Activated CD8-positive, alpha-beta T cell treated with anti-CD3 and anti-CD28 coated beads for 36 hours (primary cell): ENCODE measurements at regions of chr1 and their contacts with region 1.

Region 1: DNA sequence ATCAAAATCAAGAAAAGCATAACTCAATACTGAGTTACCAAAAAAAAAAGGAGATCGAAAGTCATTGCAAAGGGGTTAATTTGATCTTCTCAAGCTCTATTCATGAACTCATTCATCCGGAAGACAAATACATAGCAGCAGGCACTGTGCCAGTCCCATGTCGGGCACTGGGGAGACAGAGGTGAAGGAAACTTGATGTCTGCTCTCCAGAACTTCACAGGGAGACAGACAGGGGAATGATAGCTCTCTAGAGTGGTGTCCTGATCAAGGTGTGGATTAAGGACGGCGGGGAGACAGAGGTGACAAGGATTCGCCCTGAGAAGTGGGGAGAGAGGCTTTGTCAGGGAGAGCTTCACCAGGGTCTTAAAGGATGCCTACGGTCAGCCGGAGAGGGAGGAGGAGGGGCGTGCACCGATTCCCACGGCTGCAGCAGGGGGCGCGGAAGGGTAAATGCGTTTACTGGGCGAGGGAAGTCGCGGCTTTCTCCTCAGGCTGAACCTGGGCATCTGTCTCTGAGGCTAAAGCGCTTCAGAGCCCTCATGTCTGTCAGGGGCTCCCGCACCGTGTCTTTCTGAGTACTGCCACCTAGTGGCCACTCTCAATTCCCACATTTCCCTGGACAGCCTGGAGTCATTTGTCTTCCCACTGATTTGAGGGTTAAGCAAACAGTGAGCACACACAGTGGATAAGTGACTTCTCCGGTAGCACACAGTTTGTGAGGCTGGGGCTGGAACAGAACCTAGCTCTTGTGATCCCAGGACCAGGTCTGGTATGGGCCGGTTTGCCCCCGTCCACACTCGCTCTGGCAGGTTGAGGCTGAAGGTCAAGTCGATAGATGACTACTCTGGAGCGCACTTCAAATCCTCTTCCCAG is 152.8 kb downstream of the TENT5C start:
- DNase-seq: peak; percentile 78
- ATAC-seq: peak; percentile 89
- H3K4me3 Mint-ChIP-seq: peak overlapping the region; percentile 62
- H3K27ac Mint-ChIP-seq: no peak overlapping the region
- H3K4me1 Mint-ChIP-seq: peaks cover 5% of the 10 kb centered on the region
- H3K27me3 Mint-ChIP-seq: peaks cover 12% of the 10 kb centered on the region
- CTCF ChIP-seq: peak; percentile 86

Region 2: DNA sequence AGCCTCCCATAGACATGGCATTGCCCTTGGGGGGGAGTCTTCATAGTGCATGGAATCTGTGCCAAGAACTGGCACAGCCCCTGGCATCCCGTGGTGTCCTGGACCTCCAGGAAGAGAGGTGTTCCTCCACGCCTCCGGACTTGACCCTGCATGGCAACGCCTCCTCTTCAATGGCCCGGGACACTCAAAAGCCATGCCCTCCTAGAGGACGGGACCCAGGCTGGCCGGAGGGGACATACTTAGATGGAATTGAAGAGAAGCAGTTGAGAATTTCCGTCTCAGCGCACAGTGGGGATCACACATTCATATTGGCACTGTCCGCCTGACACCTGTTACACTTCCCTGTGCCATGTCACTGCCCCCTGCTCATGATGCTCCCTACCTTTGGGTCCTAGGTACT is 191.2 kb before region 1 on chr1:
- CTCF ChIA-PET with region 1: interaction called, 11 read pairs
- POLR2A ChIA-PET with region 1: interaction called, 3 read pairs
- intact Hi-C with region 1: no loop called
- DNase-seq: no peak
- ATAC-seq: no peak
- H3K4me3 Mint-ChIP-seq: no peak overlapping the region
- H3K27ac Mint-ChIP-seq: no peak overlapping the region
- H3K4me1 Mint-ChIP-seq: peaks cover 7% of the 10 kb centered on the region
- H3K27me3 Mint-ChIP-seq: no peaks in the 10 kb centered on the region
- CTCF ChIP-seq: no peak

Region 3: GRCh38 chr1:117674521-117675397 is 83.9 kb before region 1 on chr1:
- CTCF ChIA-PET with region 1: interaction called, 28 read pairs
- POLR2A ChIA-PET with region 1: interaction called, 4 read pairs
- intact Hi-C with region 1: no loop called
- DNase-seq: peak; percentile 72
- ATAC-seq: peak; percentile 76
- H3K4me3 Mint-ChIP-seq: no peak overlapping the region
- H3K27ac Mint-ChIP-seq: no peak overlapping the region
- H3K4me1 Mint-ChIP-seq: peaks cover 12% of the 10 kb centered on the region
- H3K27me3 Mint-ChIP-seq: peaks cover 28% of the 10 kb centered on the region
- CTCF ChIP-seq: peak; percentile 46

Region 4: GRCh38 chr1:117710710-117711109 is 48.0 kb before region 1 on chr1:
- CTCF ChIA-PET with region 1: interaction called, 85 read pairs
- POLR2A ChIA-PET with region 1: no interaction called
- intact Hi-C with region 1: no loop called
- DNase-seq: peak; percentile 20
- ATAC-seq: no peak
- H3K4me3 Mint-ChIP-seq: no peak overlapping the region
- H3K27ac Mint-ChIP-seq: no peak overlapping the region
- H3K4me1 Mint-ChIP-seq: no peaks in the 10 kb centered on the region
- H3K27me3 Mint-ChIP-seq: peaks cover 7% of the 10 kb centered on the region
- CTCF ChIP-seq: no peak

Region 5: DNA sequence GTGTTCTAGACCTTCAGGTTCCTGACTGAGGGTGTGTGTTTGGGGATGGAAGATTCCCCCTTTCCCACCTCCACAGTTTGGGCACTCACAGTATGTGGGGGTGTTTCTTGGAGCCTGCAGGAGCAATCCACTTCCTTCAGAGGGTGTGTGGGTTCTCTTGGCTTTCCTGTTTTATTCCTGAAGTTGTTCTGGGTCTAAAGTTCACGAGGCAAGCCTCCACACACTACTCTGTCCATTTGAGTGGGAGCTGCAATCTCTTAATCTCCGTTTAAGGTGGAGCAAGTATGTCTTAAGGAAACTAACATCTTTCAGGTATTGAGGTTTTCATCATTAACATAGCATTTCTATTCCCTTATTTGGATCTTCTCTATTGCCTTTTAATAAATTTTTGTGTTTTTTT is 11.1 kb before region 1 on chr1:
- CTCF ChIA-PET with region 1: interaction called, 40 read pairs
- POLR2A ChIA-PET with region 1: no interaction called
- intact Hi-C with region 1: no loop called
- DNase-seq: no peak
- ATAC-seq: no peak
- H3K4me3 Mint-ChIP-seq: no peak overlapping the region
- H3K27ac Mint-ChIP-seq: no peak overlapping the region
- H3K4me1 Mint-ChIP-seq: no peaks in the 10 kb centered on the region
- H3K27me3 Mint-ChIP-seq: peaks cover 22% of the 10 kb centered on the region
- CTCF ChIP-seq: no peak